ENCODE measurements at regions of chr3 and their contacts with region 1.

Region 1: GRCh38 chr3:184289426-184289938 is 9.6 kb upstream of the PSMD2 start:
- DNase-seq: peak; percentile 85
- ATAC-seq: peak; percentile 87
- H3K4me3 Mint-ChIP-seq: no peak overlapping the region
- H3K27ac Mint-ChIP-seq: no peak overlapping the region
- H3K4me1 Mint-ChIP-seq: no peaks in the 10 kb centered on the region
- H3K27me3 Mint-ChIP-seq: peaks cover 9% of the 10 kb centered on the region

Region 2: GRCh38 chr3:183895296-183895695 is 394.2 kb before region 1 on chr3:
- CTCF ChIA-PET with region 1: interaction called, 6 read pairs
- POLR2A ChIA-PET with region 1: no interaction called
- intact Hi-C with region 1: loop called (anchors 1 kb)
- DNase-seq: peak; percentile 38
- ATAC-seq: peak; percentile 59
- H3K4me3 Mint-ChIP-seq: no peak overlapping the region
- H3K27ac Mint-ChIP-seq: no peak overlapping the region
- H3K4me1 Mint-ChIP-seq: no peaks in the 10 kb centered on the region
- H3K27me3 Mint-ChIP-seq: peaks cover 7% of the 10 kb centered on the region

Region 3: GRCh38 chr3:184145111-184145524 is 144.4 kb before region 1 on chr3:
- CTCF ChIA-PET with region 1: interaction called, 3 read pairs
- POLR2A ChIA-PET with region 1: no interaction called
- intact Hi-C with region 1: loop called in 1 of 2 experiments (anchors 1 kb)
- DNase-seq: peak; percentile 59
- ATAC-seq: peak; percentile 81
- H3K4me3 Mint-ChIP-seq: no peak overlapping the region
- H3K27ac Mint-ChIP-seq: no peak overlapping the region
- H3K4me1 Mint-ChIP-seq: no peaks in the 10 kb centered on the region
- H3K27me3 Mint-ChIP-seq: no peaks in the 10 kb centered on the region

Region 4: DNA sequence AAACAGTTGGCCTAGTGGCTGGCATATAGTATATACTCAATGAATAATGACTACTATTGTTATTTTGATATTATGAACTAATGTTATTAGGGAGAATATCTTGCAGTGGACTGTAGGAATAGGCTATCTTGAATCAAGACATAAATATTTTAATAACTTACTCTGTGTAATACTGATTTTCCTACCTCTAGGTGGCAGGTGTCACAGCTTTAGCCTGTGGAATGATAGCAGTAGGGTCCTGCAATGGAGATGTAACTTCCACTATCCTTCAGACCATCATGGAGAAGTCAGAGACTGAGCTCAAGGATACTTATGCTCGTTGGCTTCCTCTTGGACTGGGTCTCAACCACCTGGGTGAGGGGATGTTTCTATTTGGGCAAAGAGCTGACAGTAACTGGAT is 16.1 kb after region 1 on chr3:
- CTCF ChIA-PET with region 1: no interaction called
- POLR2A ChIA-PET with region 1: no interaction called
- intact Hi-C with region 1: no loop called
- DNase-seq: no peak
- ATAC-seq: peak; percentile 57
- H3K4me3 Mint-ChIP-seq: no peak overlapping the region
- H3K27ac Mint-ChIP-seq: no peak overlapping the region
- H3K4me1 Mint-ChIP-seq: peaks cover 13% of the 10 kb centered on the region
- H3K27me3 Mint-ChIP-seq: no peaks in the 10 kb centered on the region

Measured in activated CD4-positive, alpha-beta T cell treated with anti-CD3 and anti-CD28 coated beads for 36 hours (primary cell).